ENCODE measurements at regions of chr1 and their contacts with region 1.

Region 1: GRCh38 chr1:212368073-212368484 is 46.6 kb downstream of the PACC1 start:
- DNase-seq: peak in 1 of 2 donors; percentile 58
- ATAC-seq: peak; percentile 72 to 88 (median 85)
- H3K4me3 ChIP-seq: no peak overlapping the region
- H3K27ac ChIP-seq: no peak overlapping the region
- H3K4me1 ChIP-seq: peaks cover 0 to 30% (median 11%) of the 10 kb centered on the region in 9 donors
- H3K27me3 ChIP-seq: no peaks in the 10 kb centered on the region
- CTCF ChIP-seq: peak; percentile 60 to 90 (median 85)

Region 2: GRCh38 chr1:212012034-212012740 is 355.9 kb before region 1 on chr1:
- intact Hi-C with region 1: loop called in 1 of 10 experiments (anchors 5 kb)
- DNase-seq: peak; percentile 32 to 58
- ATAC-seq: peak; percentile 63 to 89 (median 82)
- H3K4me3 ChIP-seq: no peak overlapping the region
- H3K27ac ChIP-seq: no peak overlapping the region
- H3K4me1 ChIP-seq: peaks cover 0 to 3% (median 0%) of the 10 kb centered on the region in 9 donors
- H3K27me3 ChIP-seq: no peaks in the 10 kb centered on the region
- CTCF ChIP-seq: peak; percentile 71 to 96 (median 89)

Region 3: GRCh38 chr1:212062832-212063438 is 305.1 kb before region 1 on chr1:
- intact Hi-C with region 1: loop called in 4 of 10 experiments (anchors 2 to 5 kb)
- DNase-seq: no peak
- ATAC-seq: peak in 3 of 8 donors; percentile 29 to 55 (median 31)
- H3K4me3 ChIP-seq: no peak overlapping the region
- H3K27ac ChIP-seq: no peak overlapping the region
- H3K4me1 ChIP-seq: peaks cover 0 to 12% (median 0%) of the 10 kb centered on the region in 9 donors
- H3K27me3 ChIP-seq: no peaks in the 10 kb centered on the region
- CTCF ChIP-seq: peak; percentile 53 to 80 (median 72)

Region 4: DNA sequence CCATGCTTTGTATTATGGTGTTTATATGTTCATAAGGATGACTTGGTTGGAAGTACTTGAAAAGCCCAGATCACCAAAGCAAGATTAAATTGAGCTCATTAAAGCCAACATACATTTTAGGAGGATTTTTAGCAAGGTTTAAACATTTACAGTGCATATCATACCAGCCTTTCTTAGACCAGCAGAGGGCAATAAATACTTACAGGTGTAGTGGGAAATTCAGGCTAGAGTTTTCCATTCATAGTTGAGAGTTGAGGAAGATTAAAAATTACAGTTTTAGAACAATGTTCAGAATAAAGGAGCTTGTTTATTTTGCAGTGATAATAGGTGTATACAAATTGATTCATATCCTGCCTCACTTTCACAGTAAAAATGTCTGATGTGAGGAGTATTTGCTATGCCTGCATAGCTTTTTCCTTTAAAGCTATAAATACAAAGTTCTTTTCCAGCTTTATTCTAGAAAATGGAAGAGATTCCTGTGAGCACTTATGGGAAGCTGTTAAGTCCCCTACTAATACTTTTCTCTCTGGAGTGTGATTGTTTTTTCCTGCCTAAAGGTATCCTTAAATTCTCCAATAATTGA is 297.3 kb before region 1 on chr1:
- intact Hi-C with region 1: loop called in 8 of 10 experiments (anchors 1 to 5 kb)
- DNase-seq: no peak
- ATAC-seq: peak; percentile 52 to 83 (median 58)
- H3K4me3 ChIP-seq: no peak overlapping the region
- H3K27ac ChIP-seq: peak overlapping the region in 2 of 10 donors; percentile 0 to 58
- H3K4me1 ChIP-seq: peaks cover 0 to 39% (median 9%) of the 10 kb centered on the region in 9 donors
- H3K27me3 ChIP-seq: no peaks in the 10 kb centered on the region
- CTCF ChIP-seq: peak; percentile 66 to 91 (median 81)

Region 5: GRCh38 chr1:212291505-212292134 is 76.5 kb before region 1 on chr1:
- intact Hi-C with region 1: loop called in 4 of 10 experiments (anchors 5 kb)
- DNase-seq: no peak
- ATAC-seq: peak; percentile 56 to 82 (median 74)
- H3K4me3 ChIP-seq: peak overlapping the region in 1 of 10 donors; percentile 9
- H3K27ac ChIP-seq: peak overlapping the region in 4 of 10 donors; percentile 4 to 98 (median 9)
- H3K4me1 ChIP-seq: peaks cover 0 to 100% (median 80%) of the 10 kb centered on the region in 9 donors
- H3K27me3 ChIP-seq: no peaks in the 10 kb centered on the region
- CTCF ChIP-seq: peak in 7 of 9 donors; percentile 54 to 78 (median 68)

Region 6: DNA sequence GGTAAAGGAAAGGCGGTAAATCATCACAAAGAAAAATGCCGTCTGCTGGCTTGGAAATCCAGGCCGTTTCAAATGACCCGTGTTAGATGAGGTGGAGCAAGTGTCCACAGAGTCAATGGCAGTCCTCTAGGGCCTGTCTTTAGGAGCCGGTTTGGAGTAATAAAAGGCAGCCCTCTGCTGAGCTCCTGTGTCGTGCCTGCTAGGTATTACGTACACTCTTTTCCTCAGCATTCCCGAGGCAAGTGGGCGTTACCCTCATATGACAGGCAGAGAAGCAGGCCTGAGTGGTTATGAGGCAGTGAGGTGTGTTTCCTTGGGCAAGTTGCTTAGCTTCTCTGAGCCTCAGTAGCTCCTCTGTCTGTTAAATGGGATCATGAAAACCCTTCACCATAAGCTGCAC is 72.3 kb after region 1 on chr1:
- intact Hi-C with region 1: no loop called
- DNase-seq: no peak
- ATAC-seq: no peak
- H3K4me3 ChIP-seq: no peak overlapping the region
- H3K27ac ChIP-seq: no peak overlapping the region
- H3K4me1 ChIP-seq: peaks cover 0 to 12% (median 0%) of the 10 kb centered on the region in 9 donors
- H3K27me3 ChIP-seq: no peaks in the 10 kb centered on the region
- CTCF ChIP-seq: no peak

Measured in heart right ventricle (tissue), 16 donors.